ENCODE measurements at regions of chr21 and their contacts with region 1.

Region 1: DNA sequence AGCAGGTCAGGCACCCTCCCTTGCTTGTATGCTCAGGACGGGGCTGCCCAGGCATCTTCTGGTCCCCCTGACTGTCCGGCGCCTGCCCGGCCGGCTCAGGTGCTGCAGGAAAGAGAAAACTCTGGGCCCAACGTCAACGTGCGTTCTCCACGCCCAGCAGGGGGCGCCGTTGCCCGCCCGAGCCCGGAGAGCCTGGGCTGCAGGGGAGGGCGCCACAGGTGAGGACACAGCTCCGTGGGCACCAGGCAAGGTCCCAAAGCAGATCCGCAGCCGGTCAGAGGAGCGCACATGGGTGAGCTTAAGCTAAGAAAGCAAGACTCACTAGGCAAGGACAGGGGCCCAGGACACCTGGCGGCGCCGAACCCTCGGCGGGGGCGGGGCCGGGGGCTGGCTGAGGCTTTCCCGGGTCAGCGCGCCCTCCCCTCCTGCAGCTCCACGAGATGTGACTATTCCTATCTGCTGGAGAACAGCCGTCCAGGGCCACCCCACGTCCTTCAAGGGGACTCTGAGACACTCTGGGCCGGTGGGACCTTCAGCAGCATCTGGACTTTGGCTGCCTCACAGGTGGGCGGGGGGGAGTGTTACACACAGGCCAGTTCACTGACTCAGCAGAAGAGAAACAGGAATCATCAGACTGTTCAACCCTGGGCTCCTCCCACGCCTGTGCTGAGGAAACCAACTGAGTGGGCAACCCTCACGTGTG is 29.3 kb downstream of the KRTAP10-1 start:
- DNase-seq: peak; percentile 94
- H3K4me3 ChIP-seq: peak overlapping the region in 5 of 8 donors; percentile 16 to 62 (median 25)
- H3K27ac ChIP-seq: peak overlapping the region in 1 of 8 donors; percentile 33
- H3K4me1 ChIP-seq: peaks cover 0 to 29% (median 16%) of the 10 kb centered on the region in 6 donors
- H3K27me3 ChIP-seq: peaks cover 0 to 30% (median 0%) of the 10 kb centered on the region in 7 donors
- CTCF ChIP-seq: peak; percentile 68 to 92 (median 85)
- POLR2A ChIP-seq: peak in 1 of 3 donors; percentile 6

Region 2: DNA sequence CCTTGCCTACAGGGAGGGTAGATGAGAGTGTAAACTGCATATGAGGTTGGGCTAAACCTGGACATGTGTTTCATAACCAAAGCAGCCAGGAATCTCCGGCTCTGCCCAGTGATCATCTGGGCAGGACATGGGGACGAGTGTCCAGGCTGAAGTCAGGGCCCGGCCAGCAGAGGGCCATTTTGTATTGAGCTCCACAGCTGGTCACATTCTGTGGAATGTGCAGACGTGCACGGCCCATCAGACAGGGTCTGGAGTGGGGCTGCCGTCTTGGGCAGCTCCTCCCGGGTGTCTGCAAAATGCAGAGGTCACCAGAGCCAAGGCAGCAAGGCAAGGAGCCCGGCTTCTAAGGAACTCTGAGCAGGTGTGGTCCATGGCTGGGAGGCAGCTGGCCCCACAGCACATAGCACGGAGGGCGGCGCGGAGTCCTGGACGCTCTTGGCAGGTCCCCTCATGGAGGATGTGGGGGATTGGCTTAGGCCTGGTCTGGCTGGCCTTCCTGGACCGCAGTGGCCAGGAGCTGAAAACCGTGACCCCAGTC is 49.1 kb before region 1 on chr21:
- intact Hi-C with region 1: no loop called
- DNase-seq: no peak
- H3K4me3 ChIP-seq: no peak overlapping the region
- H3K27ac ChIP-seq: no peak overlapping the region
- H3K4me1 ChIP-seq: peaks cover 0 to 2% (median under 1%) of the 10 kb centered on the region in 6 donors
- H3K27me3 ChIP-seq: no peaks in the 10 kb centered on the region
- CTCF ChIP-seq: peak in 1 of 11 experiments; percentile 9
- POLR2A ChIP-seq: no peak

Region 3: DNA sequence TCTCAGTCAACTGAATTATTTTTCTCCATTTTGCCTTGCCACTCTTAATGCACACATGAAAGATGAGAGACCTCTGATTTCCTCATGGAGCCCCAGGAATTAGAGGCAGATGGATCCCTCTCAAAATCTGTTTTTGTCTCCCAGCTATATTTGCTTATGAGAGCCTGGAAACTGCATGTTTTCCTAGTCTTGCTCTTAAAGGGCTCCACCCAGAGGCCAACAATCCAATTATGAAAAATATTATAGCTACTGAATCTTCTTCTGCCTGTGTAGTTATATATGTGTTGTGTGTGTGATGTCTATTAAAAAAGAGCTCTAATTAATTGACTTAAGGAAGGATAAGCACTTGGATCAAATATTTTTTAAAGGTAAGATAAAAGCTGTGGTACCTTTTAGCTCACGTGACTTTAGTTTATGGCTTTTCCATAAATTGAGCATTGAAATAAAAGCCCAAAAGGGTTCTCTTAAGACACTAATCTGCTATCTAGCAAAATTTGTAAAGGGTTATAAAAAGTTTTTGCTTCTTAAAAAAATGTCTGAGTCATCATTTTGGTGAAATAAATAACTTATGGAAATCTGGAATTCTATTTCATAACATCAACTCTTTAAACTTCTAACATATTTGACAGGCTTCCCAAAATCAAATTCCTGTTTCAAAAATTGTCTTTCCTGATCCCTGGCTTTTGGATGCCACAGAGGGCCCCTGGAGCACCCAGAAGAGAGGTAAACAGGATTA is 231.9 kb after region 1 on chr21:
- intact Hi-C with region 1: loop called (anchors 5 kb)
- DNase-seq: no peak
- H3K4me3 ChIP-seq: no peak overlapping the region
- H3K27ac ChIP-seq: no peak overlapping the region
- H3K4me1 ChIP-seq: no peaks in the 10 kb centered on the region
- H3K27me3 ChIP-seq: no peaks in the 10 kb centered on the region
- CTCF ChIP-seq: peak in 3 of 11 experiments; percentile 12 to 29 (median 14)
- POLR2A ChIP-seq: no peak

Region 4: DNA sequence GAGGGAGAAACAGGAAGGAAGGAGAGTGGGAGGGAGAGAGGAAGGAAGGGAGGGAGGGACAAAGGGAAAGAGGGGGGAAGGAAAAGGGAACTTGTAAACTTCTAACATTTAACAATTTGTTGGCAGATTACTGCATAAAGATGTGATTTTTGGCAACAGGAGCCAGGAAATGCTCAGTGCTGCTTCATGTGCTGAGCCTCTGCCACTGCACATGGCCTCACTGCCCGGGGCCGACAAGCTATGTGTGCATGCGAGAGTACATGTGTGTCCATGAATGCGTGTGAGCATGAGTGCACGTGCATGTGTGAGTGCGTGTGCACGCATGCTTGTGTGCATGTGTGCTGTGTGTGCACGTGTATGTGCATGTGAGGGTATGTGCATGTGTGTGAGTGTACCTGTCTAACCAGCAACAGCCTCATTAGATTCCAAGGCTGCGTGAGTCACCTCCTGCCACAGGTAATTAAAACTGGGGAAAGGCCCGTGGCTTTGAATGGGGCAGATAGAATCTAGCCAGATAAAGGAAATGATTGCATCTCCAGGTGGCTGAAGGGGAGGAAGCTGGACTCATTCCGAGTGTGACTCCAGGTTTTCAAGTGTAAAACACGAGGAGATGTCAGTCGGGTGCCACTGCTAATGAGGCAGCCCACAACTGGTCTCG is 242.1 kb after region 1 on chr21:
- intact Hi-C with region 1: no loop called
- DNase-seq: no peak
- H3K4me3 ChIP-seq: no peak overlapping the region
- H3K27ac ChIP-seq: no peak overlapping the region
- H3K4me1 ChIP-seq: no peaks in the 10 kb centered on the region
- H3K27me3 ChIP-seq: peaks cover 0 to 46% (median 5%) of the 10 kb centered on the region in 7 donors
- CTCF ChIP-seq: no peak
- POLR2A ChIP-seq: no peak

Region 5: DNA sequence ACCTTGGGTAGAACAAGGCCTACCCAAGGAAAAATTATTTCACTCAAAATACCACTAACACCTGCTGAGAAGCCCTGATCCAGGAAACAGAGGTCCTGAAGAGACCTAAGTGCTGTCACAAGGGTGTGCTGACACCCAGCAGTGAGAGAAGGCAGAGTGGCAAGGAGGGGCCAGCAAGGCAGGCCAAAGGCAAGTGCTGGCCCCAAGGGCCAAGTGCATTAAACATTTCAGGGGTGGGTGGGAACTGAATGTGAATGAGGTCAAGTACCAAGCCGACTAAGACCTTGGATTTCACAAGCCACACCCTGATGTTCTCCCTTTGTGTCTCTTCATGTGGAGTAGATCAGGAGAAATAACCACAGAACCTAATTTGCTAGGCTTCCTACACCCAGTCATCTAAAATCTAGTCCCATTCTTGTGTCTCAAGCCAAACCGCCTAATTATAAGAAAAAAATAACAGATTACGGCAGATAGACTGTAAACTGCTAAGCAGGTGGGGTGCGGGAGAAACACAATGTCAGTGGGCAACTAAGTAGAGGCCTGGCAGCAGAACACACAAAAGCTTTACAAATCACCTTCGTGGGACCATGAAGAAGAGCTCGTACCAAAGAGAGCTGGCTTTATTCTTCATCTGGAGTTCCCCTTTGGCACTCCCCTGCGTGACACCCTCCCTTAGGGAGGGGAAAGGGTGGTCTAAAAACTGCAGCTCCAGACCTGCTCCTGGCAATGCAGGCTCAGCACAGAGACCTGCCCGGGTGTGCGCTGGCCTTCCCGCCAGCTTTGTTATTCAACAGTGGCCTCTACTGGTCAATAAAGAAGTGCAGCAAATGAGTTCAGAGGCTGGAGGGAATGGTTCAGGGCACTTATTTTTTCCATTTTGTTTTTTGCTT is 282.3 kb after region 1 on chr21:
- intact Hi-C with region 1: loop called (anchors 5 kb)
- DNase-seq: peak; percentile 90
- H3K4me3 ChIP-seq: no peak overlapping the region
- H3K27ac ChIP-seq: peak overlapping the region in 4 of 8 donors; percentile 1 to 32 (median 16)
- H3K4me1 ChIP-seq: peaks cover 11 to 68% (median 38%) of the 10 kb centered on the region in 6 donors
- H3K27me3 ChIP-seq: no peaks in the 10 kb centered on the region
- CTCF ChIP-seq: peak; percentile 55 to 87 (median 78)
- POLR2A ChIP-seq: no peak